IMR-90 (cell line): ENCODE measurements at regions of chr2 and their contacts with region 1.

Region 1: DNA sequence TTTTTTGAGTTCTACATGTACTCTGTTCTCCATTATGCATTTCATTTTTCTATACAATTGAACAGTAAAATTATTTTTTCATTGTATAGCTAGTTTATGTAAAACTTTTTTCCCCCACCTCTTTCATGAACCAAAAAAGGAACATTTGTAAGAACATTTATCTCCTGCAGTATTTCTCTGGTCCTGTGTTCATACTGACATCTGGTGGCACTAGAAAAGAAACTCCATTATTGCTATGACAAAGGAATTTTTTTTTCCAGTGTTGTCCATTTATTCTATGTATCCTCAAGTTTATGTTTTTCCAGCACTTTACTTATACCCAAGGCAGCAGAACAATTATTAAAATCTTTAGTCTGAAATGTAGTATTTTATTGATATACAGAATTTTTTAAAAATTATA is 27.4 kb upstream of the CHAC2 start:
- DNase-seq: peak; percentile 64
- ATAC-seq: peak; percentile 64
- H3K4me3 ChIP-seq: no peak overlapping the region
- H3K27ac ChIP-seq: no peak overlapping the region
- H3K4me1 ChIP-seq: peaks cover 4% of the 10 kb centered on the region
- H3K27me3 ChIP-seq: no peaks in the 10 kb centered on the region
- CTCF ChIP-seq: peak; percentile 71
- POLR2A ChIP-seq: no peak
- RAD21 ChIP-seq: peak; percentile 78

Region 2: DNA sequence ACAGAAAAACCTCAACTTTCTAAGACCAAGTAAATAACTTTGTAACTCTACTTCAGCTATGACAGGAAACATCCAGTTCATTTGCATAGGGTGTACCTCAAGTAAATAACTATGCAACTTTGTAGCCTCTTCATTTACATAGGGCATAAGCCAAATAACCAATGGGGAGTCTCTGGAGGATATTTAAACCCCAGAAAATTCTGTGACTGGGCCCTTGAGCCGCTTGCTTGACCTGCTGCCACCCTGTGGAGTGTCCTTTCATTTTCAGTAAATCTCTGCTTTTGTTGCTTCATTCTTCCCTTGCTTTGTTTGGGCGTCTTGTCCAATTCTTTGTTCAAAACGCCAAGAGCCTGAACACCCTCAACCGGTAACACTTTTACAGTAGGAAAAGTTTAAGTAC is 1595.6 kb before region 1 on chr2:
- CTCF ChIA-PET with region 1: interaction called, 3 read pairs
- POLR2A ChIA-PET with region 1: no interaction called
- dilution Hi-C with region 1: no loop called
- in situ Hi-C with region 1: no loop called
- intact Hi-C with region 1: loop called (anchors 10 kb)
- DNase-seq: peak; percentile 1
- ATAC-seq: peak; percentile 49
- H3K4me3 ChIP-seq: no peak overlapping the region
- H3K27ac ChIP-seq: no peak overlapping the region
- H3K4me1 ChIP-seq: no peaks in the 10 kb centered on the region
- H3K27me3 ChIP-seq: no peaks in the 10 kb centered on the region
- CTCF ChIP-seq: no peak
- POLR2A ChIP-seq: no peak
- RAD21 ChIP-seq: peak; percentile 23; the same call in 1 of the 2 replicates

Region 3: GRCh38 chr2:53018825-53019425 is 721.2 kb before region 1 on chr2:
- CTCF ChIA-PET with region 1: no interaction called
- POLR2A ChIA-PET with region 1: no interaction called
- dilution Hi-C with region 1: no loop called
- in situ Hi-C with region 1: no loop called
- intact Hi-C with region 1: loop called (anchors 10 kb)
- DNase-seq: peak; percentile 34
- ATAC-seq: peak; percentile 62
- H3K4me3 ChIP-seq: no peak overlapping the region
- H3K27ac ChIP-seq: no peak overlapping the region
- H3K4me1 ChIP-seq: no peaks in the 10 kb centered on the region; the same call in 1 of the 2 replicates
- H3K27me3 ChIP-seq: no peaks in the 10 kb centered on the region
- CTCF ChIP-seq: peak; percentile 30; the same call in 1 of the 2 replicates
- POLR2A ChIP-seq: no peak
- RAD21 ChIP-seq: peak; percentile 19; the same call in 1 of the 2 replicates

Region 4: DNA sequence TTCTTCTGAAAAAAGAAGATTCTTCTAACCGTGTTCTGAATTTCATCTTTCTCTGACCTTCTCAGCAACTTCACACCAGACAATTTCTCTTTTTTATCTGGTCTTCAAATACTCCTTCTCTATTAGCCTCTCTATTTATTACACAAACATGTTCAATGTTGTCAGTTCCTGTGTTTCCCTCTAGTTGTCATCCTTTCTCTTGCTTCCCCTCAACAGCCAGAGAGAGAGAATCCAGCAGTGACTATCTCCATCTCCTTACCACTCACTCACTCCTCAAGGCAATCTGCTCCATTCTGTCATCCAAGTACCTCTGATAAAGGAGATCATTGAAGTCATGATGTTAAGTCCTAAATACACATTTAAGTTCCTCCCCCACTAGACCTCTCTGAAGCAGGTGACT is 464.4 kb before region 1 on chr2:
- CTCF ChIA-PET with region 1: no interaction called
- POLR2A ChIA-PET with region 1: no interaction called
- dilution Hi-C with region 1: no loop called
- in situ Hi-C with region 1: no loop called
- intact Hi-C with region 1: loop called (anchors 10 kb)
- DNase-seq: no peak
- ATAC-seq: no peak
- H3K4me3 ChIP-seq: no peak overlapping the region
- H3K27ac ChIP-seq: no peak overlapping the region
- H3K4me1 ChIP-seq: no peaks in the 10 kb centered on the region
- H3K27me3 ChIP-seq: no peaks in the 10 kb centered on the region
- CTCF ChIP-seq: no peak
- POLR2A ChIP-seq: no peak
- RAD21 ChIP-seq: no peak

Region 5: DNA sequence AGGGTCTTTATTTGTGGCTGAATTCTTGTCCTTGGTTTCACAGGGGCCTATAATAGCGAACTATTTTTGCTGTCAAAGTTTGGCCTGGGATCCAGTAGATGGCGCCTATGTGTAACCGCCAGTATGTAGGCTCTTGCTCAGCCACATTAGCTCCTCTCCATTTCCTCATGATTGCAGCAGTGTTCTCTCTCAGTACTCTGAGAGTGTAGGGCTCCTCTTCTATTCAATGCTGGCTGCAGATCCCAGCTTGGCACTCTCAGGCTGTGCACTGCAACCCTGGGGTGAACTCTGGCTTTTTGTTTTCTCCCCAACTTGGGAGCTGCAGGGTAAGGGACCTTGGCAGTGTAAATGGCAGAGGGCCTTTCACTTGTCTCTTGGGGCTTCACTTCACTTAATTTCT is 317.2 kb before region 1 on chr2:
- CTCF ChIA-PET with region 1: interaction called, 3 read pairs
- POLR2A ChIA-PET with region 1: no interaction called
- dilution Hi-C with region 1: no loop called
- in situ Hi-C with region 1: loop called (anchors 10 kb)
- intact Hi-C with region 1: loop called (anchors 1 kb)
- DNase-seq: peak; percentile 59
- ATAC-seq: peak; percentile 85
- H3K4me3 ChIP-seq: no peak overlapping the region
- H3K27ac ChIP-seq: no peak overlapping the region
- H3K4me1 ChIP-seq: no peaks in the 10 kb centered on the region
- H3K27me3 ChIP-seq: no peaks in the 10 kb centered on the region
- CTCF ChIP-seq: peak; percentile 64
- POLR2A ChIP-seq: no peak
- RAD21 ChIP-seq: peak; percentile 78

Region 6: GRCh38 chr2:53646788-53647187 is 93.4 kb before region 1 on chr2:
- CTCF ChIA-PET with region 1: no interaction called
- POLR2A ChIA-PET with region 1: no interaction called
- dilution Hi-C with region 1: no loop called
- in situ Hi-C with region 1: no loop called
- intact Hi-C with region 1: no loop called
- DNase-seq: no peak
- ATAC-seq: no peak
- H3K4me3 ChIP-seq: no peak overlapping the region
- H3K27ac ChIP-seq: no peak overlapping the region
- H3K4me1 ChIP-seq: no peaks in the 10 kb centered on the region
- H3K27me3 ChIP-seq: no peaks in the 10 kb centered on the region
- CTCF ChIP-seq: no peak
- POLR2A ChIP-seq: no peak
- RAD21 ChIP-seq: no peak